A673 (cell line): ENCODE measurements at regions of chr1 and their contacts with region 1.

Region 1: DNA sequence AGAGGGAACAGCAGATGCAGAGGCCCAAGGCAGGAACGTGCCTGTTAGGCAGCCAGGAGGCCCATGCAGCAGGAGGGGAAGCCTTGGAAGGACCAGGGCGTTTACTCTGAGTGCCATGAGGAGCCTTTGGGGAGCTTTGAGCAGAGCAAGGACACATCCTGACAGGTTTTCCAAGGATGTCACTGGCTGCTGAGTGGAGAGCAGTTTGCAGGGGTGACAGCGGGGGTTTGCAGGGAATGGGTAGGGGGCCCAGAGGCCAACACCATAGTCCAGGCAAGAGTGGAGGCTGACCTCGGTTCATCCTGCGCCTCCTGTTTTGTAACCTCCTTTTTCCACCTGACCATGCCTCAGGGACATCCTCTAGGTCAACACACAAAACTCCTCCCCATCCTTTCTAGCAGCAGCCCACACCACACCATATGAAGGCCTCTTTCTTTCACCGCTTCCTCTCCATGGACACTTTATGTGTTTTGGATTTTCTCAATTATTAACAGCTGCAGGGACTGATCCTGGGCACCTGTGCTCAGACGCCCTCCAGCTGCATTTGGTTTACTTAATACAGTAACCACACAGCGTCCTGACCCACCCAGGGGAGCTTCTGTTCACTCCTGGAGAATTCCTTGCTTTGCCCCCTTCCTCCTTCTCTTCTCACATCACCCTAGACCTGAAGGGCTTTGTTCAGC is 528.5 kb downstream of the MATN1 start:
- DNase-seq: no peak
- H3K4me3 ChIP-seq: no peak overlapping the region
- H3K27ac ChIP-seq: no peak overlapping the region
- H3K4me1 ChIP-seq: no peaks in the 10 kb centered on the region
- H3K27me3 ChIP-seq: no peaks in the 10 kb centered on the region
- CTCF ChIP-seq: no peak

Region 2: DNA sequence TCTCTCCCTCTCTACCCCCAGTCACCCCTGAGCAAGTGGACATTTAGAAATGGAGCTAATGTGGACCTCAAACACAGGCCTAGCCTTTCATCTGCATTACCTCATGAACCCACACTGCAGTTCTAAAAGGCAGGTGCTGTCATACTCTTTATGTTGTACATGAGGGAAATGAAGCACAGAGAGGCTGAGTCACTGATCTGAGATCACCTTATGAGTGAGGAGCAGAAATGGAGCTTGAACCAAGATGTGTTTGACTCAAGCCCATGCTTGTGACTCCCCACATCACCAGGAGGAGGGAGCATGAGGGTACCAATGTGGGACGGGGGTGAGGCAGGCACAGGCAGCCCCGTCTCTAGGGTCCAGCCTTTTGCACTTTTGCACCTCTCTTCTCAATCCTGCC is 255.8 kb before region 1 on chr1:
- CTCF ChIA-PET with region 1: no interaction called
- POLR2A ChIA-PET with region 1: no interaction called
- intact Hi-C with region 1: no loop called
- DNase-seq: no peak
- H3K4me3 ChIP-seq: no peak overlapping the region
- H3K27ac ChIP-seq: no peak overlapping the region
- H3K4me1 ChIP-seq: no peaks in the 10 kb centered on the region
- H3K27me3 ChIP-seq: no peaks in the 10 kb centered on the region
- CTCF ChIP-seq: no peak

Region 3: DNA sequence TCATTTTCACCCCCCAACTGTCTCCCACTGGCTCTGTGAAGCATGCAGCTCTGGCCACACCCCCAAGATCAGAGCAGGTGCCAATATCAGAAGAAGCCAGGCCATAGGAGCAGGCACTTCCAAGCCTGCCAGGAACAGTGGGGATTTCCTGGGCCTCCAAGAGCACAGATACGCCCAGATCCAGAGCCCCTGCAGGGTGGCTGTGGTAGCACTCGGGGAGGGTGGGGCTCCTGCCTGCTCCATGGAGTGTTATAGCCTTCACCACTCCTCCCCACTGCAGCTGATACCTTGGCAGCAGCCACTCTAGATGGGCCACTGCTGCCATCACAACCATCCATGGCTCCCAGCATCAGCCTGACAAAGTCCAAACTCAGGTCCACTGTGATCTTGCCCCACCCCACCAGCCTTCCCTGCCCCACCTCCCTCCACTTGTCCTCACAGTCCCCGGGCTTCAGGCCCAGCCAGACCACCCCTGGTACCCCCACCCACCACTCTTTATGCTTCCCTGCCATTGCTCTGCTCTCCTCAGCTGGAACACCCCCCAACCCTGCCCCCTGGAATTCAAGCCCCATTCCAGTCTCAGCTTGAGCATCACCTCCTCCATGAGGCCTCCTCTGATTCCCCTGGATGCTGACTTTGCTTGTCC is 80.2 kb after region 1 on chr1:
- CTCF ChIA-PET with region 1: interaction called, 10 read pairs
- POLR2A ChIA-PET with region 1: no interaction called
- intact Hi-C with region 1: no loop called
- DNase-seq: peak; percentile 88
- H3K4me3 ChIP-seq: no peak overlapping the region
- H3K27ac ChIP-seq: peak overlapping the region; percentile 81
- H3K4me1 ChIP-seq: peaks cover 70% of the 10 kb centered on the region
- H3K27me3 ChIP-seq: no peaks in the 10 kb centered on the region
- CTCF ChIP-seq: no peak